ENCODE measurements at regions of chr17 and their contacts with region 1.

Region 1: GRCh38 chr17:51764387-51764972 is 394.0 kb downstream of the CA10 start:
- DNase-seq: peak; percentile 24 to 54 (median 39)
- H3K4me3 ChIP-seq: no peak overlapping the region
- H3K27ac ChIP-seq: no peak overlapping the region
- H3K4me1 ChIP-seq: peaks cover 2% of the 10 kb centered on the region
- H3K27me3 ChIP-seq: no peaks in the 10 kb centered on the region
- CTCF ChIP-seq: peak; percentile 31 to 68 (median 43)
- EP300 ChIP-seq: no peak
- POLR2A ChIP-seq: no peak

Region 2: GRCh38 chr17:51846566-51846965 is 82.1 kb after region 1 on chr17:
- intact Hi-C with region 1: no loop called
- DNase-seq: no peak
- H3K4me3 ChIP-seq: no peak overlapping the region
- H3K27ac ChIP-seq: no peak overlapping the region
- H3K4me1 ChIP-seq: no peaks in the 10 kb centered on the region
- H3K27me3 ChIP-seq: no peaks in the 10 kb centered on the region
- CTCF ChIP-seq: no peak
- EP300 ChIP-seq: no peak
- POLR2A ChIP-seq: no peak

Region 3: GRCh38 chr17:51901242-51901641 is 136.8 kb after region 1 on chr17:
- intact Hi-C with region 1: no loop called
- DNase-seq: no peak
- H3K4me3 ChIP-seq: no peak overlapping the region
- H3K27ac ChIP-seq: no peak overlapping the region
- H3K4me1 ChIP-seq: no peaks in the 10 kb centered on the region
- H3K27me3 ChIP-seq: no peaks in the 10 kb centered on the region
- CTCF ChIP-seq: no peak
- EP300 ChIP-seq: no peak
- POLR2A ChIP-seq: no peak

Region 4: DNA sequence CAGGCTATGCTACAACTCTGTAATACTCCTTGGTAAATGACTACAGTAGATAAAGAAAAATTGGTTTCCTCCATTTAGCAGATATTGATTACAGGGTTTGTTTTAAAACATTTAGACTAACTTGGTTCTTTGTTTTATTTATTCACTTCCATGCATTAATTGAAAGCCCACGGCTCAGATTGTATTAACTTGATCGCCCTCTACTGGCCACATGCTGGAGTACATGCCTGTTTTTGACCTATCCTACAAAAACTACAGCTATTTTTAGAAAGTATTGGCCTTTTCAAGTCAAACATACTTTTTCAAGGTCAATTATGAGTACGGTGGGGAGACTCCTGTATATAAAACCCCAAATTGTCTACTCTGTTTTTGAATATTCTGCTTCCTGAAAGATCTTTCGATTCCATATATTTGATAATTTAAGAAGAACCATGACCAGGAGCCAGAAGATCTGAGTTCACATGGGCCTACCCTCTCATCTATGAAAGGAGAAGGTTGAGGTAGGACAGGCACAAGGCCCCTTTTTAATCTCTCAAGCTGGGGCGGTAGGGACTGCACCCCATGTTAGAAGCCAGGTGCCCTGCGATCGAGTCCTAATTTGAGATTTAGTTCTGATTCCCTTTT is 342.3 kb after region 1 on chr17:
- intact Hi-C with region 1: loop called in 2 of 4 experiments (anchors 10 kb)
- DNase-seq: peak; percentile 28 to 60 (median 52)
- H3K4me3 ChIP-seq: no peak overlapping the region
- H3K27ac ChIP-seq: no peak overlapping the region
- H3K4me1 ChIP-seq: peaks cover 4% of the 10 kb centered on the region
- H3K27me3 ChIP-seq: no peaks in the 10 kb centered on the region
- CTCF ChIP-seq: peak in 2 of 3 donors; percentile 48 to 74
- EP300 ChIP-seq: no peak
- POLR2A ChIP-seq: no peak

Measured in ovary (tissue), 10 donors.